ENCODE measurements at regions of chr5 and their contacts with region 1.

Region 1: DNA sequence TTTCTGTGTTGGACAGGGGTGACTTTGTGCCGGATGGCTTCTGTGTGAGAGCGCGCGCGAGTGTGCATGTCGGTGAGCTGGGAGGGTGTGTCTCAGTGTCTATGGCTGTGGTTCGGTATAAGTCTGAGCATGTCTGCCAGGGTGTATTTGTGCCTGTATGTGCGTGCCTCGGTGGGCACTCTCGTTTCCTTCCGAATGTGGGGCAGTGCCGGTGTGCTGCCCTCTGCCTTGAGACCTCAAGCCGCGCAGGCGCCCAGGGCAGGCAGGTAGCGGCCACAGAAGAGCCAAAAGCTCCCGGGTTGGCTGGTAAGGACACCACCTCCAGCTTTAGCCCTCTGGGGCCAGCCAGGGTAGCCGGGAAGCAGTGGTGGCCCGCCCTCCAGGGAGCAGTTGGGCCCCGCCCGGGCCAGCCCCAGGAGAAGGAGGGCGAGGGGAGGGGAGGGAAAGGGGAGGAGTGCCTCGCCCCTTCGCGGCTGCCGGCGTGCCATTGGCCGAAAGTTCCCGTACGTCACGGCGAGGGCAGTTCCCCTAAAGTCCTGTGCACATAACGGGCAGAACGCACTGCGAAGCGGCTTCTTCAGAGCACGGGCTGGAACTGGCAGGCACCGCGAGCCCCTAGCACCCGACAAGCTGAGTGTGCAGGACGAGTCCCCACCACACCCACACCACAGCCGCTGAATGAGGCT is at the start of gene ADRB2:
- DNase-seq: peak; percentile 99
- total RNA-seq, gene ADRB2: 2.6 TPM

Region 2: GRCh38 chr5:148740966-148741742 is 85.0 kb before region 1 on chr5:
- intact Hi-C with region 1: loop called (anchors 5 kb)
- DNase-seq: no peak

Region 3: DNA sequence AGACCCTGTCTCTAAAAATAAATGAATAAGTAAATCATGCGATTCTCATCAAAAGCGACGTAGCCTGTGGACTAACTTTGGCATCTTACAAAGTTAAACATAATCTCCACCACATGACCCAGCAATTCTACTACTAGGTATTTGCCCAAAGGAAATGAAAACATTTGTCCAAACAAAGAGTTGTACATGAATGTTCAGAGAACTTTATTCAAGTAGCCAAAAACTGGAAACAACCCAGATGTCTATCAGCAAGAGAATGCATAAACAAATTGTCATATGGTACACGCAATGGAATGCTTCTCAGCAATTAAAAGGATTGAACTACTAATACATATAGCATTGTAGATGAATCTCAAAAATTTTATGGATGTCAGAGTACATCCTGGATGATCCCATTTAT is 82.8 kb after region 1 on chr5:
- intact Hi-C with region 1: loop called (anchors 5 kb)
- DNase-seq: no peak

Region 4: DNA sequence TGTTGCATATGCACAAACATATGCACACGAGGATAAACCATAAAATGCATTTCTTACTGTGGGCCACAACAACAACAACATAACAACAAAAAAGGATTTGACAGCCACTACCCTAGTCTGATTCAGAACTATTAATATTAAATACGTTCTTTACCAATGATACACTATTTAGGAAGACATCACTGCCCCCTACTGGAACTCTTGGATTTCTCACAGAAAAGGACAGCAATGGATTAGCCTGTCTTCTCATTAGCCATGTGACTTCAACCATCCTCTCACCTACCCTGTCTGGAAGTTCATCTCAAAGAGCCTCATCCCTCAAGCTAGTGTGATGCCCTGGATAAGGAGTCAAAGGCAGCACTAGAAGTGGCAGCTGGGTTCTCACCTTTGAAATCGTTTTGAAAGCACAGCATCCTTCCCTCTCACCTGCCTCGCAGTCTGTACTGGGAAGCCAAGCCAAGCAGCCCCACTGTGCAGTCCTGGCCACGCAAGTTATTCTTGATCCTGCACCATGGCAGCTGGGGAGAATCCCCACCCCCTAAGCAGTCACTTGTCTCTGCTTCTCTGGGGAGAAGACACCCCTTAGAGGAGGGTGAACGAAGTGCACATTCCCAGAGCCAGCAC is 172.1 kb after region 1 on chr5:
- intact Hi-C with region 1: loop called (anchors 10 kb)
- DNase-seq: no peak

Region 5: DNA sequence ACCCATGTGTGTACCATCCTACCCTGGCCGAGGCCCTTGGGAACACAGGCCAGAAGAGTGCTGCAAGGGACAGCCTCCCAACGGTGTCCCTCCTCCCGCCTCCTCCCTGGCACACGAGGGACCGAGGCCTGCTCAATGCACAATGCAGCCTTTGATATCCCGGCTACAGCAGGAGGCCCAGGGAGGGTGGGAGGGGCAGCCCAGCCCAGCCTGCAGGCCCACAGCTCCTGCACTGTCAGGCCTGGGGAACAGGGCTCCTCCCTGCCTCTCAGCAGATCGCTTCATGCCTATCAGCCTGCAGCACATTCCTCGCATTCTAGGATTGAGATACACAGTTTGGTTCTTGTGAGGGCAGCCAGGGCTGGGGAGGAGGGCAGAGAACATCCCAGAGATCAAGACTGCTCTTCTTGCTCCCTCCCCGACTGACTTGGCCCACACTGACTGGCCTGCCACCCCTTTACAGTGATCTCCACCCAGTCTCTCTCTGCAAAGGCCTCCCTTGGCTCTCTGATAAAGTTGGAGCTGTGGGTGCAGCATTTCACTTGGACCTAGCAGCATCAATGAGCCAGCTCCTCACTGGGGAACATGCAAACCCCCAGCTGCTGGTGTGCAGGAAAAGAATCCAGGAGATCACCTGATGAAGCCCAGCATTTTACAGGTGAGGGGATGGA is 237.0 kb after region 1 on chr5 and contains the start of gene SH3TC2:
- intact Hi-C with region 1: loop called (anchors 2 kb)
- DNase-seq: peak; percentile 82
- total RNA-seq, gene SH3TC2: 2.5 TPM

Measured in cardiac septum (tissue), 1 donor.